Endothelial cell of umbilical vein (primary cell): ENCODE measurements at regions of chrX and their contacts with region 1.

Region 1: GRCh38 chrX:109890895-109891502 is 111.9 kb upstream of the TMEM164 start:
- DNase-seq: peak; percentile 53
- H3K4me3 ChIP-seq: no peak overlapping the region
- H3K27ac ChIP-seq: no peak overlapping the region
- H3K4me1 ChIP-seq: no peaks in the 10 kb centered on the region
- H3K27me3 ChIP-seq: no peaks in the 10 kb centered on the region
- CTCF ChIP-seq: peak; percentile 71 to 72
- POLR2A ChIP-seq: no peak

Region 2: GRCh38 chrX:109270580-109271484 is 620.2 kb before region 1 on chrX:
- CTCF ChIA-PET with region 1: no interaction called
- POLR2A ChIA-PET with region 1: no interaction called
- dilution Hi-C with region 1: no loop called
- intact Hi-C with region 1: no loop called
- DNase-seq: no peak
- H3K4me3 ChIP-seq: no peak overlapping the region
- H3K27ac ChIP-seq: no peak overlapping the region
- H3K4me1 ChIP-seq: no peaks in the 10 kb centered on the region
- H3K27me3 ChIP-seq: peaks cover 0 to 9% of the 10 kb centered on the region in 2 experiments
- CTCF ChIP-seq: no peak
- POLR2A ChIP-seq: no peak

Region 3: DNA sequence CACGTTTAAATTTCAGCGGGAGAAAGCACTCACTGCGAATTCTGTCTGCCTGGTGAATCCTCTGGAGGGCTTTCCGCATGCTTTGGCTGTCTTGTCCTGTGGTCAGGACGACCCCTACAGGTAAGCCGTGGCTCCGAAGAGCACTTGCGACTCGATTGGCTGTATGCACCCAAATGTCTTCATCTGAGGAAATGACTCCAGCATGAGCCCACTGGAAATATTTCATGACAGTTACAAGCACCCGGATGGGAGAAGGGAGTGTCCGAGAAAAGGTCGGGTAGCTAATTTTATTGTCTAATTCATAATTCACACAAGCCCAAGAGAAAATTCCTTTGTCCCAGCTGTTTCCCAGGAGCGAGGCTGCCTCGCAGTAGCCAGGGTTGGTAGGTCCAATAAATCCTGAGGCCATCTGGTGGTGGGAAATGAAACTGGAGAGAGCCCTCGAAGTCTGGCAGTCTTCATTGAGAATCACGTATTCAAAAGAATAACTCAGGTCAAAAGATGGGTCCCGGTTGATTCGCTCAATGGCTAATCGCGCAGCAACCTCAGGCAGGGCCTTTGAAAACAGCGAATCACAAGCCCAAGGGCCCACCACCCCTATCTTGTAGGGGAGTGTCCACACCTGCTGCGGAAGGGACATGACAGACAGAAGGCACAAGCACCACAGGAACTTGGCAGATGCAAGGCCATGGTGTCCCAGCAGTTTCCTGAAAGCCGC is 415.7 kb before region 1 on chrX:
- CTCF ChIA-PET with region 1: interaction called, 22 read pairs
- POLR2A ChIA-PET with region 1: no interaction called
- dilution Hi-C with region 1: no loop called
- intact Hi-C with region 1: no loop called
- DNase-seq: peak; percentile 58
- H3K4me3 ChIP-seq: peak overlapping the region in 1 of 3 experiments; percentile 39
- H3K27ac ChIP-seq: no peak overlapping the region
- H3K4me1 ChIP-seq: peaks cover 14% of the 10 kb centered on the region
- H3K27me3 ChIP-seq: no peaks in the 10 kb centered on the region
- CTCF ChIP-seq: peak; percentile 24 to 32
- POLR2A ChIP-seq: no peak

Region 4: GRCh38 chrX:109624641-109625616 is 266.1 kb before region 1 on chrX and contains the start of gene KCNE5:
- CTCF ChIA-PET with region 1: interaction called, 3 read pairs
- POLR2A ChIA-PET with region 1: no interaction called
- dilution Hi-C with region 1: no loop called
- intact Hi-C with region 1: loop called (anchors 5 kb)
- DNase-seq: no peak
- H3K4me3 ChIP-seq: peak within 1 kb of the TSS in 1 of 3 experiments; percentile 25
- H3K27ac ChIP-seq: no peak within 1 kb of the TSS
- H3K4me1 ChIP-seq: peaks cover 7% of the 10 kb centered on the region
- H3K27me3 ChIP-seq: no peaks in the 10 kb centered on the region
- CTCF ChIP-seq: no peak
- POLR2A ChIP-seq: no peak
- total RNA-seq, gene KCNE5: 0.31 and 0.44 TPM in 2 replicates

Region 5: GRCh38 chrX:109709129-109709631 is 181.8 kb before region 1 on chrX:
- CTCF ChIA-PET with region 1: interaction called, 101 read pairs
- POLR2A ChIA-PET with region 1: no interaction called
- dilution Hi-C with region 1: no loop called
- intact Hi-C with region 1: loop called (anchors 1 kb)
- DNase-seq: peak; percentile 6
- H3K4me3 ChIP-seq: no peak overlapping the region
- H3K27ac ChIP-seq: peak overlapping the region; percentile 5
- H3K4me1 ChIP-seq: peaks cover 12% of the 10 kb centered on the region
- H3K27me3 ChIP-seq: no peaks in the 10 kb centered on the region
- CTCF ChIP-seq: no peak
- POLR2A ChIP-seq: no peak

Region 6: GRCh38 chrX:109856974-109857373 is 34.0 kb before region 1 on chrX:
- CTCF ChIA-PET with region 1: interaction called, 20 read pairs
- POLR2A ChIA-PET with region 1: no interaction called
- dilution Hi-C with region 1: no loop called
- intact Hi-C with region 1: loop called (anchors 1 kb)
- DNase-seq: peak; percentile 66
- H3K4me3 ChIP-seq: no peak overlapping the region
- H3K27ac ChIP-seq: peak overlapping the region; percentile 75
- H3K4me1 ChIP-seq: peaks cover 17% of the 10 kb centered on the region
- H3K27me3 ChIP-seq: no peaks in the 10 kb centered on the region
- CTCF ChIP-seq: peak; percentile 38 to 43
- POLR2A ChIP-seq: no peak

Region 7: GRCh38 chrX:110146521-110146920 is 255.5 kb after region 1 on chrX:
- CTCF ChIA-PET with region 1: interaction called, 27 read pairs
- POLR2A ChIA-PET with region 1: no interaction called
- dilution Hi-C with region 1: no loop called
- intact Hi-C with region 1: no loop called
- DNase-seq: peak; percentile 36
- H3K4me3 ChIP-seq: no peak overlapping the region
- H3K27ac ChIP-seq: no peak overlapping the region
- H3K4me1 ChIP-seq: no peaks in the 10 kb centered on the region
- H3K27me3 ChIP-seq: no peaks in the 10 kb centered on the region
- CTCF ChIP-seq: peak; percentile 48
- POLR2A ChIP-seq: no peak